Activated naive CD4-positive, alpha-beta T cell treated with anti-CD3 and anti-CD28 coated beads for 36 hours (primary cell): ENCODE measurements at regions of chr9 and their contacts with region 1.

Region 1: GRCh38 chr9:68949271-68950000 is 64.5 kb downstream of the PRKACG start:
- DNase-seq: peak; percentile 64
- H3K4me3 Mint-ChIP-seq: no peak overlapping the region
- H3K27ac Mint-ChIP-seq: peak overlapping the region; percentile 7
- H3K4me1 Mint-ChIP-seq: peaks cover 40% of the 10 kb centered on the region
- H3K27me3 Mint-ChIP-seq: peaks cover 4% of the 10 kb centered on the region

Region 2: GRCh38 chr9:68427216-68427977 is 522.0 kb before region 1 on chr9:
- CTCF ChIA-PET with region 1: no interaction called
- intact Hi-C with region 1: no loop called
- DNase-seq: no peak
- H3K4me3 Mint-ChIP-seq: no peak overlapping the region
- H3K27ac Mint-ChIP-seq: no peak overlapping the region
- H3K4me1 Mint-ChIP-seq: no peaks in the 10 kb centered on the region
- H3K27me3 Mint-ChIP-seq: peaks cover 16% of the 10 kb centered on the region

Region 3: GRCh38 chr9:68685770-68686169 is 263.7 kb before region 1 on chr9:
- CTCF ChIA-PET with region 1: interaction called, 3 read pairs
- intact Hi-C with region 1: loop called (anchors 5 kb)
- DNase-seq: peak; percentile 61
- H3K4me3 Mint-ChIP-seq: no peak overlapping the region
- H3K27ac Mint-ChIP-seq: no peak overlapping the region
- H3K4me1 Mint-ChIP-seq: peaks cover 5% of the 10 kb centered on the region
- H3K27me3 Mint-ChIP-seq: peaks cover 16% of the 10 kb centered on the region

Region 4: GRCh38 chr9:68779558-68780384 is 169.7 kb before region 1 on chr9:
- CTCF ChIA-PET with region 1: no interaction called
- intact Hi-C with region 1: loop called (anchors 1 kb)
- DNase-seq: peak; percentile 96
- H3K4me3 Mint-ChIP-seq: no peak overlapping the region
- H3K27ac Mint-ChIP-seq: no peak overlapping the region
- H3K4me1 Mint-ChIP-seq: peaks cover 8% of the 10 kb centered on the region
- H3K27me3 Mint-ChIP-seq: no peaks in the 10 kb centered on the region

Region 5: GRCh38 chr9:68895741-68896478 is 53.5 kb before region 1 on chr9:
- CTCF ChIA-PET with region 1: interaction called, 7 read pairs
- intact Hi-C with region 1: loop called (anchors 1 kb)
- DNase-seq: no peak
- H3K4me3 Mint-ChIP-seq: peak overlapping the region; percentile 61
- H3K27ac Mint-ChIP-seq: peak overlapping the region; percentile 89
- H3K4me1 Mint-ChIP-seq: peaks cover 42% of the 10 kb centered on the region
- H3K27me3 Mint-ChIP-seq: no peaks in the 10 kb centered on the region

Region 6: GRCh38 chr9:68979538-68980314 is 30.3 kb after region 1 on chr9:
- CTCF ChIA-PET with region 1: interaction called, 32 read pairs
- intact Hi-C with region 1: loop called (anchors 1 kb)
- DNase-seq: peak; percentile 69
- H3K4me3 Mint-ChIP-seq: peak overlapping the region; percentile 28
- H3K27ac Mint-ChIP-seq: peak overlapping the region; percentile 76
- H3K4me1 Mint-ChIP-seq: peaks cover 41% of the 10 kb centered on the region
- H3K27me3 Mint-ChIP-seq: peaks cover 5% of the 10 kb centered on the region

Region 7: GRCh38 chr9:69027355-69028096 is 78.1 kb after region 1 on chr9:
- CTCF ChIA-PET with region 1: interaction called, 3 read pairs
- intact Hi-C with region 1: loop called (anchors 1 kb)
- DNase-seq: peak; percentile 65
- H3K4me3 Mint-ChIP-seq: no peak overlapping the region
- H3K27ac Mint-ChIP-seq: no peak overlapping the region
- H3K4me1 Mint-ChIP-seq: peaks cover 36% of the 10 kb centered on the region
- H3K27me3 Mint-ChIP-seq: no peaks in the 10 kb centered on the region

Region 8: DNA sequence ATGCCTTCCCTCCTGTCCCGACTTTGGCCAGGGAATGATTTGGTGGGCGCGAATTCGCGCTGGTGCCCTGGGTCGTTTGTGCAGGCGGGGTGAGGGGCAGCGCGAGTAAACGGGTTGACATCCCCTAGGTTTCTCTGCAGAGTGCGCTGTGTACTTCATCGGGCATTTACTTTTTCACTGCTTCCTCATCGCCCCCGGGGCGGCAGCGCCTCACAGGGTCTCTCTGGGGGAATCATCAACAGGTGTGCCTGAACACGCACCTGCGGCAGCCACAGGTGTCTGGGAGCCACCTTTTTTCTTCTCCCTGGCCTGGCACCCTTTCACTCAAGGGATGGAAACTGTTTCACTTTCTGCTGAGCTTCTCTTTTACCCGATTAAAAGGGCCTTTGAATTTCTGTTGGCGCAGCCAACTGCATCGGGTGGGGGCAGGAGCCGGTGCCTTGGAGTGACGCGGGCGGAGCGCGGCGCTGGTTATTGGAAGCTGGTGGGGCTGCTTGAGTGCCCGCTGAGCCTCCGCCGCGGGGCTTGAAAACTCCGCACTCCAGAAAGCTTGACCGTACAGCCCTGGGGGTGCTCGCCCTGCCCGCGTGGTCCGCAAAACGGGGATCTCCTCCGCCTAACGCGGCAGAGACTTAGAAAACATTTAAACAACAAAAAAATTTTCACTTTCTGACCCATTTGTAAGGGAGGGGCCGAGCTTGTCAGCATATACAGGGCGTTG is 172.6 kb after region 1 on chr9:
- CTCF ChIA-PET with region 1: no interaction called
- intact Hi-C with region 1: no loop called
- DNase-seq: peak; percentile 56
- H3K4me3 Mint-ChIP-seq: peak overlapping the region; percentile 87
- H3K27ac Mint-ChIP-seq: no peak overlapping the region
- H3K4me1 Mint-ChIP-seq: peaks cover 13% of the 10 kb centered on the region
- H3K27me3 Mint-ChIP-seq: no peaks in the 10 kb centered on the region